A673 (cell line): ENCODE measurements at regions of chr3 and their contacts with region 1.

Region 1: GRCh38 chr3:13452490-13453335 is 27.4 kb upstream of the HDAC11 start:
- DNase-seq: peak; percentile 73
- H3K4me3 ChIP-seq: peak overlapping the region; percentile 15
- H3K27ac ChIP-seq: no peak overlapping the region
- H3K4me1 ChIP-seq: no peaks in the 10 kb centered on the region
- H3K27me3 ChIP-seq: no peaks in the 10 kb centered on the region
- CTCF ChIP-seq: peak; percentile 68

Region 2: DNA sequence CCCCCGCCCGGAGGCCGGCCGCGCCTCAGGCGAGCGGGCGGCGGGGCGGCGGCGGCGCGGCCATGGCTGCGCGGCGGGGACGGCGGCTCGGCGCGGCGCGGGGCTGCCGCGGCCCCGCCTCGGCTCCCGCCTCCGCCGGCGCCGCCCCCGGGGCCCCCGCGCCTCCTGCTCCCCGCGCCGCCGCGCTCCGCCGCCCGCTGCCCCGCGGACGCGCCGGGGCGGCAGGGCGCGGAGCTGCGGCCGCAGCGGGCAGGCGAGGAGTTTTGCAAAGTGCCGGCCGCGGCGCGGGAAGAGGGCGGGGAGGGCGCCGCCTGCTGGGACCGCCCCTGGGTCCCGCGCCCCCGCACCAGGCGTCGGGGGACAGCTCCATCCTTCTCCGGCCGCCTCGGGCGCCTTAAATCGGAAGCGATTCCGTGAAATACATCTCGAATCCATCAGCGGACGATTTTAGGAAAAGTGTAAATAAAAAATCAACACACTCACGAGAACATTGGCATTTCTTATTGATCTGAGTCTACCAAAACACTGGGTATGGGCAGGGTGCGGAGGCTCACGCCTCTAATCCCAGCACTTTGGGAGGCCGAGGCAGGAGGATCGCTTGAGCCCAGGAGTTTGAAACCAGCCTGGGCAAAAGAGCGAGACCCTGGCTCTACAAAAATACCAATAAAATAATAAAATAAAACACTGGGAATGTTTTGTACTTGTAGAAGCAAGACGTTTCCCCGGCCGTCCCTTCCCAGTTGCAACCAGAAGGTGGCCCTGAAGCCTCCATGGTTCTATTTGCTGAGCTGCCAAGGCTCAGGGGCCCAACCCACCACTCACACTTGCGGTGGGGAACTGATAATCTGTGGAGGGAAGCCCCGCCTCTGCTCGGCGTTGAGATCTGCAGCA is 169.5 kb before region 1 on chr3:
- CTCF ChIA-PET with region 1: no interaction called
- POLR2A ChIA-PET with region 1: no interaction called
- intact Hi-C with region 1: loop called (anchors 2 kb)
- DNase-seq: peak; percentile 19
- H3K4me3 ChIP-seq: peak overlapping the region; percentile 27
- H3K27ac ChIP-seq: no peak overlapping the region
- H3K4me1 ChIP-seq: no peaks in the 10 kb centered on the region
- H3K27me3 ChIP-seq: peaks cover 38% of the 10 kb centered on the region
- CTCF ChIP-seq: 0 out of 2 replicates have a peak, but pooled peaks have one; percentile 22

Region 3: DNA sequence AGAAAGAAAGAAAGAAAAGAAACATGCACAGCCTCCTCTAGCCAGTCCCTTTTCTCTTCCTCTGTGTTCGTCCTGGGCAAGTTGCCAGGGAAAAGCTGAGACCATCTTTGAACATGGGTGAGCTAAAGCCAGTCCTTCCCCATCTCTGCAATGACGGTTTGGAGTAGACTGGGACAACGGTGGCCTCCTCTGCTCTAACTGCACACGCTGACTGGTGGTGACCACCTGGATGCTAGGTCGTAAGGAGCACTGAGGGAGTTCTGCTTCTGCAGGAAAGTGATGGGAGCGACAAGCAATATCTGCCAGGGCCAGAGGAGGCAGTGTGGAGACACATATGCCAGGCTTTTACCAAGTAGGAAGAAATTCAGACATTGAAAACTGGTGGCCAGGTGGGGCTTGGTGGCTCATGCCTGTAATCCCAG is 144.3 kb before region 1 on chr3:
- CTCF ChIA-PET with region 1: no interaction called
- POLR2A ChIA-PET with region 1: no interaction called
- intact Hi-C with region 1: loop called (anchors 5 kb)
- DNase-seq: peak; percentile 40
- H3K4me3 ChIP-seq: no peak overlapping the region
- H3K27ac ChIP-seq: no peak overlapping the region
- H3K4me1 ChIP-seq: no peaks in the 10 kb centered on the region
- H3K27me3 ChIP-seq: no peaks in the 10 kb centered on the region
- CTCF ChIP-seq: peak; percentile 55

Region 4: GRCh38 chr3:14170531-14171173 is 717.9 kb after region 1 on chr3:
- CTCF ChIA-PET with region 1: no interaction called
- POLR2A ChIA-PET with region 1: no interaction called
- intact Hi-C with region 1: no loop called
- DNase-seq: peak; percentile 62
- H3K4me3 ChIP-seq: no peak overlapping the region
- H3K27ac ChIP-seq: peak overlapping the region; percentile 84
- H3K4me1 ChIP-seq: peaks cover 24% of the 10 kb centered on the region
- H3K27me3 ChIP-seq: no peaks in the 10 kb centered on the region
- CTCF ChIP-seq: no peak

Region 5: GRCh38 chr3:14431892-14432834 is 979.5 kb after region 1 on chr3:
- CTCF ChIA-PET with region 1: no interaction called
- POLR2A ChIA-PET with region 1: no interaction called
- intact Hi-C with region 1: no loop called
- DNase-seq: peak; percentile 95
- H3K4me3 ChIP-seq: no peak overlapping the region
- H3K27ac ChIP-seq: peak overlapping the region; percentile 68
- H3K4me1 ChIP-seq: peaks cover 55% of the 10 kb centered on the region
- H3K27me3 ChIP-seq: no peaks in the 10 kb centered on the region
- CTCF ChIP-seq: no peak